PC-9 (cell line): ENCODE measurements at regions of chr13 and their contacts with region 1.

Region 1: DNA sequence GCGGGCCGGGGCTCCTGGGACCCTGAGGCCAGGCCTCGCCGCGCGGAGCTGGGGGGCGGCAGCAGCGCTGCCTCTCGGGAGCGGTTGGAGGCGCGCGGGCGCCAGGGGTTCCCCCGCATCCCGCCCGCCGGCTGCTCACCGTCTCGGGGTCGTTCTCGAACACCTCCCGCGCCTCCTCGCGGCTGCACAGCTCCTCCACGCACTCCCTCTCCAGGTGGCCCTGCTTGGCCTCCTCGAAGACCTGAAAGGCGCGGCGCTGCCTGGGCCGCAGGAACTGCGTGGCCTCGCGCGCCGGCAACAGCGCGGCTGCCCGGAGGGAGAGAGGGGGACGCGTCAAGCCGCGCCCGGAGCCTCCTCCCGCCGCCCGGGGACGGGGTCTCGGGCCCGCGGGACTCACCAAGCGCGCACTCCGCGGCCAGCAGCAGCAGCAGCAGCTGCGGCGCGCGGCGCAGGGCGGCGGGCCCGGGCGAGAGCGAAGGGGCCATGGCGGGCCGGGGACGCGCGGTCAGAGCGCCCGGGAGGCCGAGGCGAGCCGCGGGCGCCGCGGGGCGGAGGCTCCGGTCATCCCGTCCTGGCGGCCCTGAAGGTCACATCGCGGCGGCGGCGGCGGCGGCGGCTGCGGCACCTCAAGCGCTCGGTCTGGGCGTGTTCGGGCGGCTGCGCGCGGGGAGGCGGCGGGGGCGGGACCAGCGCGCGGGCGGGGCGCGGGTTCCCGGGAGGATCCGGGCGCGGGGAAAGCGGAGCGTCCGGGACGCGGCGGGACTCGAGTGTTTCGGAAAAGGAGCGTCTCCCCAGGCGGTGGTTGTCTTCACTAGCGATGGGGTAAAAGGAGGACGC is at the start of gene GAS6:
- DNase-seq: peak in 1 of 2 experiments; percentile 60
- H3K4me3 ChIP-seq: peak within 1 kb of the TSS; percentile 57
- H3K27ac ChIP-seq: no peak within 1 kb of the TSS
- H3K4me1 ChIP-seq: peaks cover 13% of the 10 kb centered on the region; the same call in 1 of the 2 replicates
- H3K27me3 ChIP-seq: peaks cover 10% of the 10 kb centered on the region; the same call in 1 of the 2 replicates
- CTCF ChIP-seq: no peak; the same call in 1 of the 2 replicates
- total RNA-seq, gene GAS6: 92.9 and 93.8 TPM in 2 replicates

Region 2: DNA sequence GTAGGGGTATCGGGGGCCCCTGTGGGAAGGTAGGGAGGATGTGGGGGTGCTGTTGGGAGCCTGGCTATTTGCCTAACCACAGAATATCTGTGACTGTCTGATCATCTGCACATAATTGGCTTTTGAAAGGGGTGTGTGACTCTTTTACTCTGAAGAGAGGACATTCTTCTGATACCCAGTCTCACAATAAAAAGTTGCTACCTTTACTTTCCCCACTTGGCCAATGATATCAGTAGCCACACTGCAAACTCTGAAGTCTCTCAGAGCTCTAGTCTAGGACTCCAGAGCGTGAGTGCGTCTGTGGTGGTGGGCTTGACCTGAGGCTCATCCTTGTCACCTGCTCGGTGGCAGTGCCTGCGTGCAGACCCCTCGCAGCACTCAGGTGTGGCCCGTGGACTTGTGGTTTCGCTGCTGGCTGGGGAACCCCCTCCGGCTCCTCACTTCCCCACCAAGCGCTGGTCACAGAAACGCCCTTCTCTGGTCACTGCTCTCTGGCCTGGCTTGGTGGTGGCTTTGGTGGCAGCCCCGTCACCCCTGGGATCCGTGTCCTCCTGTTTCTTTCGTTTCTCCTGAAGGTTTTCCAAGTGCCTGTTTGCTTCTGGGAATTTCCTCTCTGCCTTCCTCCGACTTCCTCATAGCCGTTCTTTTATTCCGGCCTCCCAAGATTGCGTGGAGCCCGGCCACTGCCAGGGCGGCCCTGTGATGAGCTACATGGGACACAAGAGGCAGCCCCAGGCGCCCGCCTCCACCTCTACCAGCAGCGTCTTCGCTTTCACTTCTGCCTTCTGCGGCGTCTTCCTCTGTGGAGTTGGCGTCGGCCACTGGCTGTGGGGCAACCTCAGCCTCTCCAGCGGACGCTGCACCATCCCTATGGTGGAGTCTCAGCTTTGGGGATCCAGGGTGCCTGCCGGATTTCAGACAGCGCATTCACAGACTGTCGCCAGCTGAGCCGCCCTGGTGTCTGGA is 1095.9 kb before region 1 on chr13:
- CTCF ChIA-PET with region 1: no interaction called
- POLR2A ChIA-PET with region 1: no interaction called
- intact Hi-C with region 1: no loop called
- DNase-seq: no peak
- H3K4me3 ChIP-seq: no peak overlapping the region
- H3K27ac ChIP-seq: no peak overlapping the region
- H3K4me1 ChIP-seq: 0 out of 2 replicates have a peak, but pooled peaks cover under 1% of the 10 kb centered on the region
- H3K27me3 ChIP-seq: no peaks in the 10 kb centered on the region
- CTCF ChIP-seq: no peak

Region 3: DNA sequence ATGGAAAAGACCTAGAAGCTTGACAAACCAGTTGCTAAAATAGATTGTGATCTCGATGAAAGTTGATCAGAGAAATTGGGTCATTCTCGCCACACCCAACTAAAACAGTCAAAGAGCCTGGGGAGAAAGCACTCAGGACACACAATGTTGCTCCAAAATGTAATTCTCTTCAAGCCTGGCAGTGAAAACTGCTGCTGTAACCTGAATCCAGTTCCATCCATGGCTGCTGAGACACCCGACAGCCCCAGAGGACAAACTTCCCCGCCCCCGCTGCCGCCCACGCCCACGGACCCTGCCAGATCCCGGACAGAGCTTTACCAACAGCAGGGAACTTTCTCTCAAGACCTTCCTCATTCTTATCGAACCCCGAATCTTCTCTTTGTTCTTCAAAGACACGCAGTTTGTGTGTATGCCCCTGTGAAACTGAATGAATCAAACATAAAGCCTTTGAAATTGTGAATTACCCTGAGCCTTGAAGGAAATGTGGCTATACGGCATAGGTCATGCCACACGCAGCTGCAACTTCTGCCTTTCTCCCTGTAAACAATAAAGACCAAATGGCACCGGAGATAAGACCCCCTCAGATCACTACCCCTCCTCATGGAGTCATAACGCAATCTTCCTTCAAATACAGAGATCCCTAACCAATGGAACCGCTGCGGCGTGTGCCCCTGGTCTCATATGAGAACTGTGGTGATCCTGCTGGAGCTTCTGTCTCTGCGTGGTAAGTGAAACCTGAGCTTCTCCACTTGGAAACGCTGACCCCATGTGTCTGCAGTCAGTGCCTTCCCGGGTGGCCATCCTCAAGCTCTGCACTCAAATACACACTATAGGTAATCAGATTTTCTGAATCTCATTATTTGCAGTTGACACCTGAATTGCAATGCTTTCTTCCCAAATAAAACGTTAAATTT is 571.4 kb before region 1 on chr13:
- CTCF ChIA-PET with region 1: no interaction called
- POLR2A ChIA-PET with region 1: no interaction called
- intact Hi-C with region 1: no loop called
- DNase-seq: peak; percentile 41 to 74
- H3K4me3 ChIP-seq: peak overlapping the region; percentile 50; the same call in 1 of the 2 replicates
- H3K27ac ChIP-seq: peak overlapping the region; percentile 76
- H3K4me1 ChIP-seq: peaks cover 24% of the 10 kb centered on the region
- H3K27me3 ChIP-seq: peaks cover 33% of the 10 kb centered on the region
- CTCF ChIP-seq: no peak

Region 4: DNA sequence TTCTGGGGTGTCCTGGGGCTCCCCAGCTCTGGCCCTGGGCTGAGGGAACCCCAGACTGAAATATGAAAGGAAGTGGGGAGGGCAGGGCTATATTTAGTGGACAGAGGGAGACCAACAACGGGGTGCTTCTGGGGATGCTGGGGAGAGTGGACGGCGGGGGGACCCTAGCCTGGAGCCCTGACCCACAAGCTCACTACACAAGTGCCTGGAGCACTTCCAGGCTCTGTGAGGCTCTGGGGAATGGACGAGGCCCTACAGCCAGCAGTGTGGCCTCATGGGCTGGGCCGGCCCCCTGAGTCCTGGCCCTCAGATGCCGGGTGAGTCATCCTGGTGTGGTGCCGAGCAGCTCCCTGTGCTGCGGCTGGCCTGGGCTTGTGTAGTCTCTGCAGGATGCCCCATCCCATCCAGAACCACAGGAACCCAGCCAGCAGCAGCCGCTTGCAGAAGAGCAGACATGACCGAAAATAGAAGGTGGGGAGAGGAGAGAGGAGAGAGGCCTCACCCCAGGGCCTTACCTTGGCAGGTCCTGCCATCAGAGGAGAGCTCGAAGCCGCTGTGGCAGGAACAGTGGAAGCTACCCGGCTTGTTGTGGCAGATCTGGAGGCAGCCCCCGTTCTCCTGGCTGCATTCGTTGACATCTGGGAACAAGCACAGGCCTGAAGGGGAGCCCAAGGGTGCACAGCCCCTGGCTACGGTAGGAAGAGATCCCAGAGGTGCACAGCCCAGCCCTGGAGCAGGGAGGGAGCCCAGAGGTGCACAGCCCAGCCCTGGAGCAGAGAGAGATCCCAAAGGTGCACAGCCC is 25.9 kb before region 1 on chr13:
- CTCF ChIA-PET with region 1: no interaction called
- POLR2A ChIA-PET with region 1: interaction called, 3 read pairs
- intact Hi-C with region 1: loop called (anchors 1 kb)
- DNase-seq: peak; percentile 73 to 90
- H3K4me3 ChIP-seq: no peak overlapping the region
- H3K27ac ChIP-seq: no peak overlapping the region
- H3K4me1 ChIP-seq: peaks cover 33% of the 10 kb centered on the region
- H3K27me3 ChIP-seq: no peaks in the 10 kb centered on the region
- CTCF ChIP-seq: no peak

Region 5: DNA sequence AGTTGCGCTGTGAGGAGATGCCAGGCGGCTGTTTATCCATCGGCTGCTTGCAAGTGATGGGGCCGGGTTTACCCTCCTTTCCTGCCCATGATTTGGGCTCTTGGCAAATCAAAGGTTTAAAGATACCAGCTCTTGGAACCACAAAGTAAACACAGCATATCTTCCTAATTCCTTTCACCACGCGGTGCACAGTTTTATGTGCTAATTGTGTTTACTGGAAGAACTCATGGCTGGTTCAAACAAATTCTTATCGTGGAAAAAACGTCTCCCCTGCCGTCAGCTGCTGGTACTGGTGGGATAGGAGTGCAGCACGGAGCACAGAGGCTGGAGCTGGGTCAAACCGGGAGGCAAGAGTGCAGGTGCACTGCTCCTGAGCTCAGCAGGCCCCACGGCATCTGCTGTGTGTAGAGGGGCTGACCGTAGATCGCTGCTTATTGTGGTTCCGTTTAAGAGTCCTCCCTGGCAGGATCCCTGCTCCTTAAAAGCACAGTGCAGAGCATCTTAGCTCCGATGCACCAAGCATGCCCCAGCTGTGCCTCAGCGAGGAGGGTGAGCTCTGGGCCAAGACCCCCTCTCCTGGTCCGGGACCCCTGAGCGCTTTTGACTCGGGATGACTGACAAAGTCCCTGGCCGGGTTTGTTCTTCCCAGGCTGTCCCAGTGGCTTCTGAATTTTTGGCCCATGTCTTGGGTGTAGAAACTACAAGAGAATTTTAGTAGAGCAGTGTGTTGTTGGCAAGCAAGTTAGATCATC is 51.5 kb after region 1 on chr13:
- CTCF ChIA-PET with region 1: no interaction called
- POLR2A ChIA-PET with region 1: interaction called, 10 read pairs
- intact Hi-C with region 1: no loop called
- DNase-seq: no peak
- H3K4me3 ChIP-seq: no peak overlapping the region
- H3K27ac ChIP-seq: no peak overlapping the region
- H3K4me1 ChIP-seq: no peaks in the 10 kb centered on the region
- H3K27me3 ChIP-seq: no peaks in the 10 kb centered on the region
- CTCF ChIP-seq: no peak